CD8-positive, alpha-beta memory T cell (primary cell): ENCODE measurements at regions of chr5 and their contacts with region 1.

Region 1: DNA sequence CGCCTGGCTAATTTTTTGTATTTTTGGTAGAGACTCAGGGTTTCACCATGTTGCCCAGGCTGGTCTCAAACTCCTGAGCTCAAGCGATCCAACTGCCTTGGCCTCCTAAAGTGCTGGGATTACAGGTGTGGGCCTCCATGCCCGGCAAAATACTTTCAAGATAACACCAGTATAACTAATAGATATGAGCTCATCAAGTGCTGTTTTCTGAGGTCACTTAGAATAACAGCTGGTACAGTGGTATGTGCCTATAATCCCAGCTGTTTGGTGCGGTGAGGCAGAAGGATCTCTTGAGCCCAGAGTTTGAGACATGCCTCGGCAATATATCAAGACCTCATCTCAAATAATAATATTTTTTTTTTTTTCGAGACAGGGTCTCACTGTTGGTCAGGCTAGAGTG is 30.5 kb upstream of the CREBRF start:
- DNase-seq: no peak
- H3K4me3 ChIP-seq: no peak overlapping the region
- H3K4me3 Mint-ChIP-seq: peak overlapping the region in 1 of 7 donors; percentile 13
- H3K27ac ChIP-seq: no peak overlapping the region
- H3K27ac Mint-ChIP-seq: peak overlapping the region in 3 of 8 donors; percentile 12 to 72 (median 68)
- H3K4me1 ChIP-seq: peaks cover 26% of the 10 kb centered on the region
- H3K4me1 Mint-ChIP-seq: peaks cover 4 to 19% (median 15%) of the 10 kb centered on the region in 3 donors
- H3K27me3 ChIP-seq: no peaks in the 10 kb centered on the region
- H3K27me3 Mint-ChIP-seq: no peaks in the 10 kb centered on the region

Region 2: GRCh38 chr5:172897481-172898217 is 128.0 kb before region 1 on chr5:
- CTCF ChIA-PET with region 1: no interaction called
- POLR2A ChIA-PET with region 1: no interaction called
- DNase-seq: no peak
- H3K4me3 ChIP-seq: no peak overlapping the region
- H3K4me3 Mint-ChIP-seq: peak overlapping the region in 3 of 7 donors; percentile 37 to 85 (median 63)
- H3K27ac ChIP-seq: no peak overlapping the region
- H3K27ac Mint-ChIP-seq: peak overlapping the region in 7 of 8 donors; percentile 32 to 88 (median 76)
- H3K4me1 ChIP-seq: peaks cover 3% of the 10 kb centered on the region
- H3K4me1 Mint-ChIP-seq: peaks cover 0 to 11% (median 8%) of the 10 kb centered on the region in 3 donors
- H3K27me3 ChIP-seq: no peaks in the 10 kb centered on the region
- H3K27me3 Mint-ChIP-seq: no peaks in the 10 kb centered on the region

Region 3: DNA sequence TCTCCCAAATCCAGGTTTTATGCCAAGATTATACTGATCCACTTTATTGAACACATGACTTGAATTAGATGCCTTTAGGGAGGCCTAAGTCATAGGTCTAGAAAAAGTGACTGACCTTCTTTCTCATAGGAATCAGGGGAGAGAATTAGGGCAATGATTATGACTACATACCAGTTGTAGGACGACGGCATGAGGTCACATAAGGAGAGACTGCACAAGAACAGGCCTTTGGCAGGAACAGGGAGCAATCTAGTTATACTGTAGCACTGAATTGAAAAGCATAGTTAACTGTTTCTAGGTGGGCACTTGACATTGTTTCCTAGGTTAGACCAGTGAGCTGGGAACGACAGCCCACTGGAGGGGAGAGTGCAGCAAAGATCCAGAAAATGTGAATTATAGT is 53.2 kb after region 1 on chr5:
- CTCF ChIA-PET with region 1: no interaction called
- POLR2A ChIA-PET with region 1: no interaction called
- DNase-seq: no peak
- H3K4me3 ChIP-seq: no peak overlapping the region
- H3K4me3 Mint-ChIP-seq: no peak overlapping the region
- H3K27ac ChIP-seq: no peak overlapping the region
- H3K27ac Mint-ChIP-seq: peak overlapping the region in 1 of 8 donors; percentile 80
- H3K4me1 ChIP-seq: peaks cover 4% of the 10 kb centered on the region
- H3K4me1 Mint-ChIP-seq: peaks cover 32 to 69% (median 56%) of the 10 kb centered on the region in 3 donors
- H3K27me3 ChIP-seq: no peaks in the 10 kb centered on the region
- H3K27me3 Mint-ChIP-seq: no peaks in the 10 kb centered on the region

Region 4: GRCh38 chr5:173093597-173093996 is 67.9 kb after region 1 on chr5:
- CTCF ChIA-PET with region 1: no interaction called
- POLR2A ChIA-PET with region 1: interaction called, 12 read pairs
- DNase-seq: no peak
- H3K4me3 ChIP-seq: no peak overlapping the region
- H3K4me3 Mint-ChIP-seq: no peak overlapping the region
- H3K27ac ChIP-seq: no peak overlapping the region
- H3K27ac Mint-ChIP-seq: peak overlapping the region in 5 of 8 donors; percentile 2 to 73 (median 18)
- H3K4me1 ChIP-seq: no peaks in the 10 kb centered on the region
- H3K4me1 Mint-ChIP-seq: peaks cover 42 to 60% (median 49%) of the 10 kb centered on the region in 3 donors
- H3K27me3 ChIP-seq: no peaks in the 10 kb centered on the region
- H3K27me3 Mint-ChIP-seq: no peaks in the 10 kb centered on the region